MCF 10A (cell line): ENCODE measurements at regions of chr13 and their contacts with region 1.

Region 1: GRCh38 chr13:72696579-72696978 is 30.9 kb downstream of the MZT1 start:
- DNase-seq: peak; percentile 13
- H3K4me3 Mint-ChIP-seq: no peak overlapping the region
- H3K27ac Mint-ChIP-seq: no peak overlapping the region
- H3K4me1 Mint-ChIP-seq: no peaks in the 10 kb centered on the region
- H3K27me3 Mint-ChIP-seq: peaks cover 48% of the 10 kb centered on the region
- CTCF ChIP-seq: peak; percentile 42

Region 2: DNA sequence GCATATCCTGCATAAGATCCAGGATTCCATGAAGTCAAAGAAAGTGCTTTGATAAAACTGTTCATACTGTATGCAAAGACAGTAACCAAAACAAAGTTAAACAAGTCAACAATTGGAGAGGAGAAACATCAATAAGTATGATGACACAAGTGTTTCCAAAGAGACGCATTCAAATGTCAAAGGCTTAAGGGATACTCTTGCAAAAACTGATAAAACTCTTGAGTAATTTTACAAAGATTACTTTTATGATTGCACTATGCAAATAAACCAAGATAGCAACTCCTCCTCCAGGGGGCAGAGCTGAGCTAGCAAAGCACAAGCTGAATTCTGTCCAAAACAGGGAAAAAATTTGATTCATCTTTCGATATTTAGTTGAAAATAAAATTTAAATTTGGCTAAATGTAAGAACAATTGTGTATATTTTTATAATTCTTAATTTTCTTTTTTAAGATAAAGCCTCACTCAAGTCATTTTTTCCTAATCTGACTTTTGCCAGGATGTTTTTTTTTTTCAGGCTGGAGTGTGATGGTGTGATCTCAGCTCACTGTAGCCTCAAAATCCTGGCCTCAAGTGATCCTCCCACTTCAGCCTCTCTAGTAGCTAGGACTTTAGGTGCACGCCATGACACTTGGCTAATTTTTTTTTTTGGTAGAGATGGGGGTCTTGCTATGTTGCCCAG is 53.1 kb before region 1 on chr13:
- CTCF ChIA-PET with region 1: interaction called, 3 read pairs
- POLR2A ChIA-PET with region 1: interaction called, 3 read pairs
- intact Hi-C with region 1: loop called (anchors 1 kb)
- DNase-seq: peak; percentile 59
- H3K4me3 Mint-ChIP-seq: no peak overlapping the region
- H3K27ac Mint-ChIP-seq: no peak overlapping the region
- H3K4me1 Mint-ChIP-seq: peaks cover 3% of the 10 kb centered on the region
- H3K27me3 Mint-ChIP-seq: peaks cover 56% of the 10 kb centered on the region
- CTCF ChIP-seq: peak; percentile 67

Region 3: DNA sequence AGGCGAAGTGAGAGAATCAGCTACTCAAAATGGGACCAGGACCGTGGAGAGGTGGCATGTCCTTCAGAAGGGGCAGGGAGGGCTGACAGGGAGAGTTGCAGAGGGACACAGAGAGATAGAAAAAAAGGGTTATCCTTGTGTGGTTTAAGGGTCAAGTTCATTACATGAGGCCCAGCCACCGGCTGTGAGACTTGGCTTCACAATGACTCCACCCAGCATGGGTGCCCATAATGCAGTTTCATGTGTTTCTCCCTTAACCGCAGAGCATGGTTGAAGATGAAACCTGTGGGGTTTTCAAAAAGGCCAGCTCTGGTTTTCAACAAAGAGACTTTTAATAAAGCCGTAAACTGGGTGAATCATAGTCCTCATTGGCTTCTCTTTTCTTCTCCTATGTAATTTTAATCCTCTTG is 526.8 kb after region 1 on chr13:
- CTCF ChIA-PET with region 1: no interaction called
- POLR2A ChIA-PET with region 1: no interaction called
- intact Hi-C with region 1: no loop called
- DNase-seq: no peak
- H3K4me3 Mint-ChIP-seq: no peak overlapping the region
- H3K27ac Mint-ChIP-seq: peak overlapping the region; percentile 28
- H3K4me1 Mint-ChIP-seq: peaks cover 17% of the 10 kb centered on the region
- H3K27me3 Mint-ChIP-seq: no peaks in the 10 kb centered on the region
- CTCF ChIP-seq: no peak